Activated T-helper 2 cell treated with anti-CD3 and anti-CD28 coated beads, Interferon-gamma antibody, Interleukin-2, Interleukin-4, amounts not matched to agents 10 μg/mL and 5 μg/mL and 100 μg/mL, durations not matched to agents 14 hours and 24 hours and 36 hours (primary cell): ENCODE measurements at regions of chr14 and their contacts with region 1.

Region 1: GRCh38 chr14:20343092-20343861 is at the start of gene PARP2:
- DNase-seq: peak; percentile 94
- H3K4me3 Mint-ChIP-seq: peak within 1 kb of the TSS; percentile 98
- H3K27ac Mint-ChIP-seq: peak within 1 kb of the TSS; percentile 94
- H3K4me1 Mint-ChIP-seq: peaks cover 13% of the 10 kb centered on the region
- H3K27me3 Mint-ChIP-seq: peaks cover 3% of the 10 kb centered on the region
- total RNA-seq, gene PARP2: 31.2 and 31.5 TPM in 2 replicates

Region 2: GRCh38 chr14:20204721-20205120 is 138.6 kb before region 1 on chr14:
- intact Hi-C with region 1: no loop called
- DNase-seq: no peak
- H3K4me3 Mint-ChIP-seq: no peak overlapping the region
- H3K27ac Mint-ChIP-seq: no peak overlapping the region
- H3K4me1 Mint-ChIP-seq: no peaks in the 10 kb centered on the region
- H3K27me3 Mint-ChIP-seq: no peaks in the 10 kb centered on the region

Region 3: DNA sequence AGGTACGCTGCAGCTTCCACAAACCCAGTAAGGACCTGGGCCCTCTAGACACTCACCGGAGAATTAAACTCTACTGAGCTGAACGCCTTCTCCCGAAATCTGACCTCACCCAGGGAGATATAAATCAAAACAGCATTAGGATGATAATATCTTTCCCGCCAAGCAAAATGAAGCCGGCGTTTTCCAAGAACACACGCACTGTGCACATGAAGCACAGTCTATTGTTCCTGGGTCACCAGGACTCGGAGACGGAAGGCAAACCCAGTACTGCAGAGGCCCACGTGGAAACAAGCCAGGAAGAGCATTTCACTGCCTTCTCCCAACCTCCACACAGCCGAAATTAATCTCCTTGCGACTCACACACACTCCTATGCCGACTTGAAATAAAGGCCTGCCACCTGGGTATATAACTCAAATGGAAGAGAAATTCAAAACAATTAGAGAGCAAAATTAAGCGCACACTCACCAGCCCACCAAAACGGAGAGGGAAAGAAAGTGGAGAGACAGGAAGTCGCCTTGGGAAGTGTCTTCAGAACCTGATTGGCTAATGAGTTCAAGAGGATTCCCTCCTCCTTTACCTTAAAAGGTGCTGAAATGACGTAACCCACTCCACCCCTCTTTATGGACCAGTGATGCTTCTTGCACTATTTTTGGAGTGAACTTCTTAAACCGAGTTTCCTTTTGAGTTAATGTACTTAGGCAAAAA is 10.3 kb before region 1 on chr14 and contains the start of gene CCNB1IP1:
- intact Hi-C with region 1: loop called (anchors 1 kb)
- DNase-seq: peak; percentile 48
- H3K4me3 Mint-ChIP-seq: peak within 1 kb of the TSS; percentile 97
- H3K27ac Mint-ChIP-seq: peak within 1 kb of the TSS; percentile 88
- H3K4me1 Mint-ChIP-seq: peaks cover 45% of the 10 kb centered on the region
- H3K27me3 Mint-ChIP-seq: peaks cover 4% of the 10 kb centered on the region
- total RNA-seq, gene CCNB1IP1: 44.0 and 46.8 TPM in 2 replicates

Region 4: DNA sequence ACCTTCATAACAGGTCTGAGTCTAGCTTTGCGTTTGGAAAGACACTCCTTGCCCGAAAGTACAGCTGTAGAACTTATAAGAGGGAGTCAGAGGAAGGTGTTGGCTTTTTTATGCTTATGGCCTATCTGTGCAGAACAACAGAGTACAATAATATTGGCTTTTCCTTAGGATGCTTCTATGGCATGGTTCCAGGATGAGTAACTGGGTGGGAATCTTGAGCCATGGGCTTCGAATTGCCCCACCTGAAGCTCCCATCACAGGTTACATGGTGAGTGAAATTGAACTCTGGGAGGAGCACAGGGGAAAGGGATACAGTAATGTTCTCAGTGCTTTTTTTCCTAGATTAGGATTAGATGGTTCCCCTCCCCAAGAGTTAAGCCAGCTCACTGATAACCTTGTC is 13.1 kb after region 1 on chr14:
- intact Hi-C with region 1: no loop called
- DNase-seq: no peak
- H3K4me3 Mint-ChIP-seq: no peak overlapping the region
- H3K27ac Mint-ChIP-seq: no peak overlapping the region
- H3K4me1 Mint-ChIP-seq: peaks cover 2% of the 10 kb centered on the region
- H3K27me3 Mint-ChIP-seq: no peaks in the 10 kb centered on the region

Region 5: DNA sequence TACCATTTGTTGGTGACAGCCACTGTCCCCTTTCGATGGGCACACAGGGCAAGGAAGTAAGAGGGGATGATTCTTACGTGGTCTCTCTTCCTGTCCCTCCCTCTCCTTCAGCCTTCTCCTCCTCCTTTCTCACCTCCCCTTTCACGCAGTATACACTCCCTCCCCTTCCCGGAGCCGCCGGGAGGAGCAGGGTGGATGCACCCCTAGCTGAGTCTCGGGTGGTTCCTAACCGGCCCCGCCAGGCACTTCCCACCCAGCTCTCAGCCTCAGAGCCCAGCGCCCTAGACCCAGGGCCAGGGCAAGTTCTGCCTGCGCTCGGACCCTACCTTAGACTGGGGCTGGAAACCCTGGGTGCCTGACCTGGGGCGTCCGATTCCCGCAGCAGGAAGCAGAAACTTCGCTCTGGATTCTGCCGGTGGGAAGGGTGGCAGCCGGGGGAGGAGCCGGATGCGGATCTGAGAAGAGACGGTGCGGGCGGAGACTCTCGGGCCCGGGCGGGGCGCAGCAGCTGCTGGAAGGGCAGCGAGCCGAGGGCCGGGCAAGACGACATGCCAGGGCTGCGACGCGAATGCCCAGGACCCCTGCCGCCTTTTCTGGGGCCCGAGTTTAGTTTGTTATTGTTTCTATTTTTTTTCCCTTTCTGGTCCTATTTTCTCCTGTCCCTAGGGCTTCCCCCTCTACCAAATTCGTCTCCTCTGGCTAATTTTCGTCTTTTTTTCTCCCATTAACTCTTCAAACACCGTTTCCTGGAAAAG is 69.9 kb after region 1 on chr14 and contains the start of gene TEP1:
- intact Hi-C with region 1: loop called (anchors 2 kb)
- DNase-seq: peak; percentile 64
- H3K4me3 Mint-ChIP-seq: peak within 1 kb of the TSS; percentile 97
- H3K27ac Mint-ChIP-seq: peak within 1 kb of the TSS; percentile 91
- H3K4me1 Mint-ChIP-seq: peaks cover 26% of the 10 kb centered on the region
- H3K27me3 Mint-ChIP-seq: no peaks in the 10 kb centered on the region
- total RNA-seq, gene TEP1: 32.7 and 33.6 TPM in 2 replicates

Region 6: GRCh38 chr14:20461274-20462001 is 118.2 kb after region 1 on chr14 and contains the start of gene PIP4P1:
- intact Hi-C with region 1: loop called (anchors 2 kb)
- DNase-seq: peak; percentile 99
- H3K4me3 Mint-ChIP-seq: peak within 1 kb of the TSS; percentile 89
- H3K27ac Mint-ChIP-seq: peak within 1 kb of the TSS; percentile 92
- H3K4me1 Mint-ChIP-seq: peaks cover 25% of the 10 kb centered on the region
- H3K27me3 Mint-ChIP-seq: peaks cover under 1% of the 10 kb centered on the region
- total RNA-seq, gene PIP4P1: 28.2 and 33.7 TPM in 2 replicates

Region 7: GRCh38 chr14:20682435-20683124 is 339.3 kb after region 1 on chr14:
- intact Hi-C with region 1: loop called (anchors 2 kb)
- DNase-seq: peak; percentile 68
- H3K4me3 Mint-ChIP-seq: no peak overlapping the region
- H3K27ac Mint-ChIP-seq: no peak overlapping the region
- H3K4me1 Mint-ChIP-seq: peaks cover 26% of the 10 kb centered on the region
- H3K27me3 Mint-ChIP-seq: peaks cover 2% of the 10 kb centered on the region